Sciatic nerve (tissue), 2 donors: ENCODE measurements at regions of chr5 and their contacts with region 1.

Region 1: DNA sequence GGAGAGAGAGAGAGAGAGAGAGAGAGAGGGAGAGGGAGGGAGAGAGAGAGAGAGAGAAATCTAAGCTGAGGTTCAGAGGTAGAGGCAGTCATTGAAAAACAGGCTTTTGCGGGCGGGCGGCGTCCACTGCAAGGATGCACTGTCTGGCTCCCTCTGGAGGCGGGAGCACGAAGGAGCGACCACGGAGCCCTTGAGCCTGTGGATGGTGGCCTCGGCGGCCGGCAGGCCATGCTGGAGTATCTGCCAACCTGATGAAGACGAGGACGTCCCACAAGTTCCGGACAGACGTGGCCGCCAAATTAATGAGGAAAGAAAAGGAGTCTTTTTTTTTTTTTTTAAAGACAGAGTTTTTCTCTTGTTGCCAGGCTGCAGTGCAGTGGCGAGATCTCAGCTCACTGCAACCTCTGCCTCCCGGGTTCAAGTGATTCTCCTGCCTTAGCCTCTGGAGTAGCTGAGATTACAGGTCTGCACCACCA is 2.2 kb upstream of the CCDC125 start:
- DNase-seq: peak; percentile 92
- ATAC-seq: peak; percentile 90

Region 2: DNA sequence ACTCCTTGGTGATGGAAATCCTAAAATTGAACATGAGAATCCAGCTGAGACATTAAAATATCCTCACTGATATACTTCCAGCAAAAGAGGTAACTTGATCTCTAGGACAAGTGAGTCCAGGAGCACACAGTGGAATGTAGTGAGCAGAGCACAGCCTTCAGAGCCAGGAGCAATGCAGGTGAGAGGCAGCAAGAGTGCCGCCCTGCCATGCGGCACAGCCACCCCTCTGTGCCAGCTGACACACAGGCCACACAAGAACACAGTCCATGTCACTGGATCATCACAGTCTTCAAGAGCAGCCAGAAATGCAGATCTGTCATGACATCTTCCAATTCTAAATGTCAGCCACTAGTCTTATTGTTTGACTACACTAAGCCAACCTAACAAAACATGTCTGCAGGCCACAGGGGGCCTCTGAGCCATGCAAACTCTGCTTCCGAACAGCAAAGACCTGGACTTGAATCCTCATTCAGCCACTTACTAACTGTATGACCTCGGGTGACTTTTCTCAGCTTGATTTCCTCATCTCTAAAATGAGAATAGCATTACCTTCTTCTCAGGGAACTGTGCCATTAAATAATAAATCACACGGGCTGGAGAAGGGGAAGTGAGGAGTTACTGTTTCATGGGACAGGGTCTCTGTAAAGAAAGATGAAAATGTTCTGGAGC is 49.2 kb before region 1 on chr5:
- intact Hi-C with region 1: loop called (anchors 10 kb)
- DNase-seq: no peak
- ATAC-seq: no peak

Region 3: DNA sequence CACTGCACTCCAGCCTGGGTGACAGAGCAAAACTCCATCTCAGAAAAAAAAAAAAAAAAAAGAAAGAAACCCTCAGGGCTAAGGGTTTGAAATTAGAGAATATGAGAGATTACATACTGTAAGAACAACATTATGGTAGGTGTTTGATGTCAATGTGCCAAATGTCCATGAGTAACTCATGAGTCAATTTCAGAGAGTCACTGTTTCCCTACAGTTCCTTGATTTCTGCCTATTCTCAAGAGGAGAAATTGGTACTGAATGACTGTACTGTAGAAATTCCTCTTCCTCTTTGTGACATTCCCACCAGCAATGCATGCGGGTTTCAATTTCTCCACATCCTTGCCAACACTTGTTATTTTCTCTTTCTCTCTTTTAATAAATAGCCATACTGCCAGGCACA is 115.3 kb after region 1 on chr5:
- intact Hi-C with region 1: no loop called
- DNase-seq: no peak
- ATAC-seq: no peak